ENCODE measurements at regions of chr2 and their contacts with region 1.

Region 1: GRCh38 chr2:231925303-231926179 is 655 bp downstream of the NPPC start:
- DNase-seq: peak; percentile 83
- ATAC-seq: peak; percentile 88
- H3K4me3 ChIP-seq: peak overlapping the region; percentile 41
- H3K27ac ChIP-seq: no peak overlapping the region
- H3K4me1 ChIP-seq: peaks cover 5% of the 10 kb centered on the region
- H3K27me3 ChIP-seq: peaks cover 69% of the 10 kb centered on the region
- CTCF ChIP-seq: peak; percentile 92
- POLR2A ChIP-seq: no peak
- RAD21 ChIP-seq: peak; percentile 86

Region 2: DNA sequence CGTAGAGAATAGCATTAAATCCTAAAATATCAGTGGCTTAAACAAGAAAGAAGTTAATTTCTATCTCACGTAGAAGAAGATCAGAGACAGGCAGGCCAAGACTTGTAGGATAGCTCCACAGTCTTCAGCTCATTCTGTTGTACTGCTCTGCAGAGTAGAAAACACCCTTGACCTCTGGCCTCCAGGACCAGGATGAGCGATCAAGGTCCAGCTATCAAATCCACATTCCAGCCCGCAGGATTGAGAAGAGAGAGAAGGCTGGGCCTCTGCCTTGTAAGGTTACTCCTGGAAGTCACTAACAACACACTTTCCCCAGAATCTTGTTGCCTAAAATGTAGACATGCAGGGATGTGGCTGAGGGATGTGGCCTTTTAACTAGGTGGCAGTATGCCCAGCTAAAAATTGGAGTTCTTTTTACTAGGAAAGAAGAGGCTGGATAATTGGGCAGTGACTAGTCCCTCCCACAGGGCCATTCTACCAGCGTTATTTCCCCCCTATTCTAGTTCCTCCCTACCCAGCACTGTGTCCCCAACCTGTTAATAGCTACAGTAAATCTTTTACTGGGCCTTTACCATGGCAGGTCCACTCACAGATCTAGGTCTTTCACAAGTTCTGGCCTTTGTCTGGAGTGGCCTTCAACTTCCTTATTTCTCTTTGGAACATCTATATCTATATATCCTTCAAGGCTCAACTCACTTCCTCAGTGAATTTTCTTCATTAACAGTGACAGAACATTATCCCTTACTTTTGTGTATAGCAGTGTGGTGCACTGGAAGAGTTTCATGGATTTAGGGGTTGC is 201.0 kb after region 1 on chr2:
- CTCF ChIA-PET with region 1: no interaction called
- POLR2A ChIA-PET with region 1: no interaction called
- dilution Hi-C with region 1: no loop called
- in situ Hi-C with region 1: loop called (anchors 5 kb)
- intact Hi-C with region 1: no loop called
- DNase-seq: no peak
- ATAC-seq: no peak
- H3K4me3 ChIP-seq: no peak overlapping the region
- H3K27ac ChIP-seq: no peak overlapping the region
- H3K4me1 ChIP-seq: no peaks in the 10 kb centered on the region
- H3K27me3 ChIP-seq: no peaks in the 10 kb centered on the region
- CTCF ChIP-seq: no peak
- POLR2A ChIP-seq: no peak
- RAD21 ChIP-seq: no peak

Region 3: DNA sequence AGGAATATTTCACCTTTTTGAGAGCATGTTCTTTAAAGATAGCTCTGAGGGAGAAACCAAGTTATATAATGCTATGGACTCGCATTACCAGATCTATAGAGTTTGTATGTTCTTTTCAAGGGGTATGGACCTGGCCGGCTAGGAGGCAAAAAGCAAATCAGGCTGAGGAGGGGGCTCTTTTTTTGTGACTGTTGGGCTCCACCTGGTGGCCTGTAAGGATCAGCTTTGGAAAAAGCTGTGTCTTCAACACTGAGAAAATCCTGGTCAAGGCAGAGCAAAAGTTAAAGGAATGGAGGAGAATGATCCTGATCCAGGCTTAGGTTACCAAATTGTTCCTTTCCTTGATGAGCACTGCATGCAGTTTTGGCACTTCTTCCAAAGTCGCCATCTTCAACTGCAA is 216.5 kb after region 1 on chr2:
- CTCF ChIA-PET with region 1: interaction called, 34 read pairs
- POLR2A ChIA-PET with region 1: no interaction called
- dilution Hi-C with region 1: no loop called
- in situ Hi-C with region 1: no loop called
- intact Hi-C with region 1: loop called (anchors 1 kb)
- DNase-seq: peak; percentile 31
- ATAC-seq: 0 out of 2 replicates have a peak, but pooled peaks have one; percentile 38
- H3K4me3 ChIP-seq: no peak overlapping the region
- H3K27ac ChIP-seq: no peak overlapping the region
- H3K4me1 ChIP-seq: peaks cover 6% of the 10 kb centered on the region
- H3K27me3 ChIP-seq: no peaks in the 10 kb centered on the region
- CTCF ChIP-seq: peak; percentile 59
- POLR2A ChIP-seq: no peak
- RAD21 ChIP-seq: peak; percentile 68

Region 4: GRCh38 chr2:232230557-232230956 is 305.0 kb after region 1 on chr2:
- CTCF ChIA-PET with region 1: no interaction called
- POLR2A ChIA-PET with region 1: no interaction called
- dilution Hi-C with region 1: no loop called
- in situ Hi-C with region 1: no loop called
- intact Hi-C with region 1: loop called (anchors 1 kb)
- DNase-seq: peak; percentile 17
- ATAC-seq: peak; percentile 17; the same call in 1 of the 2 replicates
- H3K4me3 ChIP-seq: no peak overlapping the region
- H3K27ac ChIP-seq: no peak overlapping the region
- H3K4me1 ChIP-seq: no peaks in the 10 kb centered on the region
- H3K27me3 ChIP-seq: no peaks in the 10 kb centered on the region
- CTCF ChIP-seq: peak; percentile 18; the same call in 1 of the 2 replicates
- POLR2A ChIP-seq: no peak
- RAD21 ChIP-seq: peak; percentile 22; the same call in 1 of the 2 replicates

Region 5: GRCh38 chr2:232327105-232328041 is 401.8 kb after region 1 on chr2:
- CTCF ChIA-PET with region 1: interaction called, 5 read pairs
- POLR2A ChIA-PET with region 1: no interaction called
- dilution Hi-C with region 1: no loop called
- in situ Hi-C with region 1: no loop called
- intact Hi-C with region 1: loop called (anchors 1 kb)
- DNase-seq: peak; percentile 50
- ATAC-seq: peak; percentile 90
- H3K4me3 ChIP-seq: no peak overlapping the region
- H3K27ac ChIP-seq: no peak overlapping the region
- H3K4me1 ChIP-seq: no peaks in the 10 kb centered on the region
- H3K27me3 ChIP-seq: no peaks in the 10 kb centered on the region
- CTCF ChIP-seq: peak; percentile 72
- POLR2A ChIP-seq: no peak
- RAD21 ChIP-seq: peak; percentile 72